ENCODE measurements at regions of chr14 and their contacts with region 1.

Region 1: DNA sequence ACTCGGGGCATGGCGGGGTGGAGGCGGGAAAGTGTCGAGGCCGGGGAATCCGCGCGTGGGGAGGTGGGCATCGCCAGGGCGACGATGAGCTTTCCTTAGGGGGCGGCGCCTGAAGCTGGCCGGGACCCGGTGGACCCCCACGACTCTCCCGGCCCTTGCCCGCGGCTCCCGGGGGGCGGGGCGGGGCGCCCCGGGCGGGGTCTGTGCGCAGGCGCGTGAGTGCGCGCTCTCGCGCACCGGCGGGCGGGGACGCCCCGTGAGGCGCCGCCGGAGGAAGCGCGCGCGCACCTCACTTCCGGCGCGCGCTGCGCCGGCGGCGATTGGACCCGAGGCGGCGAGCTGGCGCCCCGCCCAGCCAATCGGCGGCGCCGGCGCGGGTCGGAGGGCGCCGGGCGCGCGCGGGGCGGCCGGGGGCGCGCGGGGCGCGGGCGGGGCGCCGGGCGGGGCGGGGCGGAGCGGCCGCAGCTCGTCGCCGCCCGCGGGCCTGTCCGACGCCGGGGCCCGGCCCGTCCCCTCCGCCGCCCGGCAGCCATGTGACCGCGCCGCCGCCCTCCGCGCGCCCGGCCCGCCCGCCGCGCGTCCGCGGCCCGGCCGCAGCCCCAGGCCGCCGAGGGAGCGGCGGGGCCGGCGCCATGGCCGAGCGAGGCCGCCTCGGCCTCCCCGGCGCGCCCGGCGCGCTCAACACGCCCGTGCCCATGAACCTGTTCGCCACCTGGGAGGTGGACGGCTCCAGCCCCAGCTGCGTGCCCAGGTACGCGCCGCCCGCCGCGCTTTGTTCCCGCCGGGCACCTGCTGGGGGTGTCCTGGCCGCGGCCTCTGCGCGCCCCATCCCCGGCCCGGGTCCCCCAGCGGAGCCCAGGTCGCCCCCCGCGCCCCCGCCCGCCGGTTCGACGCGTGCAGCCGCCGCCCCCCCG is at the start of gene PACS2:
- DNase-seq: peak; percentile 47 to 96 (median 76)
- ATAC-seq: peak; percentile 73
- H3K4me3 ChIP-seq: peak within 1 kb of the TSS; percentile 55 to 60
- H3K4me3 Mint-ChIP-seq: peak within 1 kb of the TSS; percentile 91
- H3K27ac ChIP-seq: peak within 1 kb of the TSS; percentile 24 to 52
- H3K27ac Mint-ChIP-seq: peak within 1 kb of the TSS; percentile 85
- H3K4me1 ChIP-seq: peaks cover 21% of the 10 kb centered on the region
- H3K4me1 Mint-ChIP-seq: peaks cover 24% of the 10 kb centered on the region
- H3K27me3 ChIP-seq: no peaks in the 10 kb centered on the region
- H3K27me3 Mint-ChIP-seq: no peaks in the 10 kb centered on the region
- CTCF ChIP-seq: no peak
- total RNA-seq, gene PACS2: 46.5 to 56.1 TPM

Region 2: GRCh38 chr14:105248368-105248756 is 66.2 kb before region 1 on chr14 and contains the start of gene BTBD6:
- CTCF ChIA-PET with region 1: no interaction called
- POLR2A ChIA-PET with region 1: interaction called, 5 read pairs
- intact Hi-C with region 1: loop called in 1 of 2 experiments (anchors 1 kb)
- DNase-seq: peak; percentile 80 to 95 (median 88)
- ATAC-seq: peak; percentile 91
- H3K4me3 ChIP-seq: peak within 1 kb of the TSS; percentile 60 to 73
- H3K4me3 Mint-ChIP-seq: peak within 1 kb of the TSS; percentile 78
- H3K27ac ChIP-seq: peak within 1 kb of the TSS; percentile 51 to 73
- H3K27ac Mint-ChIP-seq: peak within 1 kb of the TSS; percentile 75
- H3K4me1 ChIP-seq: peaks cover 21% of the 10 kb centered on the region
- H3K4me1 Mint-ChIP-seq: peaks cover 33% of the 10 kb centered on the region
- H3K27me3 ChIP-seq: no peaks in the 10 kb centered on the region
- H3K27me3 Mint-ChIP-seq: no peaks in the 10 kb centered on the region
- CTCF ChIP-seq: no peak
- total RNA-seq, gene BTBD6: 34.1 to 34.4 TPM

Region 3: DNA sequence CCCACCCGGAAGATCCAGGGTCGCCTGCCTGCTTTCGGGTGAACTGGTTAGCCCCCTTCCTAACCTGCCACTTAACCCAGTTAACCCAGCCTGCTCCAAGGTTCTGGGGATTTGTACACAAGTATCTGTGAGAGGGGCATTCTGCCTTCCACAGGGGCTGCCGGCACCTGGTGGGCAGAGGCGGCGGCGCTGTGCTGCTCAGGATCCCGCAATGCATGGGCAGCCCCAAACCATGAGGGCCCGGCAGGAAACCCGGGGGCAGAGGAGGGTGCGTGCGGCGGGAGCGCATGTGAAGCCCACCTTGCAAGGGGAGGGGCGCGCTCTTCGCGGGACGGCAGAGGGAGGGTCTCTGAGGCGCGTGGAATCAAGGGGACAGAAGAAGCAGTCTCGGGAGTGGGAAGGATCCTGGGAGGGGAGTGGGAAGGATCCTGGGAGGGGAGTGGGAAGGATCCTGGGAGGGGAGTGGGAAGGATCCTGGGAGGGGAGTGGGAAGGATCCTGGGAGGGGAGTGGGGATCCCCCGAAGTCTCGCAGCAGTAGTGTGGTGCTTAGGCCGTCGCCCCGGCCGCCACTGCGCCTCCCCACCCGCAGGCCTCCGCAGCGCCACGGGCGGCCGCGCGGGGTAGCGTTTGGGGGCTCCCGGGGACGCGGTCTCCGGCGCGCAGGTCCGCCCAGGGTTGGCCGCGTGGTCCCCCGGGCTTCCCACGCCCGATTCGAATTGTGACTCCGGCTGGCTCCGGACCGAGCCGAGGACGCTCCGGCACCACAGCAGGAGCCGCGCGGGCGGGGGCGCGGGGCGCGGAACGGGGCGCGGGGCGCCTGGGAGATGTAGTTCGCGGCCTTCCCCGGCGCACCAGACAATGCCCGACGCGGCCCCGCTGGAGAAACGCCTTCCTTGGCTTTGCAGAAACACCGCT is 100.2 kb after region 1 on chr14:
- CTCF ChIA-PET with region 1: no interaction called
- POLR2A ChIA-PET with region 1: no interaction called
- intact Hi-C with region 1: loop called in 1 of 2 experiments (anchors 1 kb)
- DNase-seq: peak; percentile 27 to 79 (median 57)
- ATAC-seq: peak; percentile 82
- H3K4me3 ChIP-seq: peak overlapping the region; percentile 24 to 69
- H3K4me3 Mint-ChIP-seq: peak overlapping the region; percentile 80
- H3K27ac ChIP-seq: no peak overlapping the region
- H3K27ac Mint-ChIP-seq: no peak overlapping the region
- H3K4me1 ChIP-seq: peaks cover 26% of the 10 kb centered on the region
- H3K4me1 Mint-ChIP-seq: peaks cover 14% of the 10 kb centered on the region
- H3K27me3 ChIP-seq: peaks cover 4 to 12% of the 10 kb centered on the region in 2 experiments
- H3K27me3 Mint-ChIP-seq: peaks cover 9% of the 10 kb centered on the region
- CTCF ChIP-seq: peak; percentile 92